Gastrocnemius medialis (tissue), 4 donors: ENCODE measurements at regions of chr17 and their contacts with region 1.

Region 1: GRCh38 chr17:35432176-35433074 is at the start of gene SLFN12:
- DNase-seq: peak; percentile 24 to 35
- ATAC-seq: peak; percentile 82 to 83
- H3K4me3 ChIP-seq: peak within 1 kb of the TSS; percentile 53 to 67 (median 58)
- H3K27ac ChIP-seq: peak within 1 kb of the TSS; percentile 72 to 78 (median 75)
- H3K4me1 ChIP-seq: peaks cover 0 to 8% of the 10 kb centered on the region in 2 donors
- H3K27me3 ChIP-seq: peaks cover 7 to 15% (median 13%) of the 10 kb centered on the region in 3 donors
- CTCF ChIP-seq: no peak
- POLR2A ChIP-seq: peak in 1 of 2 donors; percentile 32
- total RNA-seq, gene SLFN12: 0.76 to 2.2 (median 1.3) TPM

Region 2: DNA sequence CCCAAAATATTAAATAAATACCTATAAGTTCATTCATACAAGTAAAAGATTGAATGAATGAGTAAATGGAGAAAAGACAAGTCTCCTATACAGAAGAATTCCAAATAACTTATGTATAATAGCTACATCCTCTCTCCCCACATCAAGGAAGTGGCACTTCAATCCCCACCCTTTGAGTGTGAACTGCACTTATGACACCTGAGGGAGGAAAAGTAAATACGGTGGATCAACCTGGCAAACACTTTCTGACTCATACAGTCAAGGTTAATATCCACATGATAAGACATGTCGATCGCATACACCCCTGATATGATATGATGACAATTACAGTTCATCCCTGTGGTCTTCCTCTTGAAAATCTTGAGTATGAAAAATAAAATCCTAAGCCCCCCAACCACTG is 87.0 kb after region 1 on chr17:
- in situ Hi-C with region 1: no loop called
- intact Hi-C with region 1: no loop called
- DNase-seq: no peak
- ATAC-seq: no peak
- H3K4me3 ChIP-seq: no peak overlapping the region
- H3K27ac ChIP-seq: no peak overlapping the region
- H3K4me1 ChIP-seq: no peaks in the 10 kb centered on the region
- H3K27me3 ChIP-seq: peaks cover 5 to 16% (median 13%) of the 10 kb centered on the region in 3 donors
- CTCF ChIP-seq: no peak
- POLR2A ChIP-seq: no peak

Region 3: DNA sequence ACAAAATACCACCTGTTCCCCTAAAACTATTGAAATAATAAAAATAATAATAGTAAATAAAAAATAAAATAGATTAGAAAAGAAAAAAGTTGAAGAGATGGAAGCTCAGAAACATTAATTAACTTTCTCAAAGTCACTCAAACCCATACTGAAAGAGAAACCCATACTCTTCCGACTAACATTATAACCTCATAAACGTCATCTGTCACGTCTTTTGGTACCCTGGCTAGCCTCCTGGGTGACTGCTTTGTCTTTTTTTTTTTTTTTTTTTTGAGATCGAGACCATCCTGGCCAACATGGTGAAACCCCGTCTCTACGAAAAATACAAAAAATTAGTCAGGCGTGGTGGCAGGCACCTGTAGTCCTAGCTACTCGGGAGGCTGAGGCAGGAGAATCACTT is 97.4 kb after region 1 on chr17:
- in situ Hi-C with region 1: loop called in 1 of 4 experiments (anchors 25 kb)
- intact Hi-C with region 1: loop called (anchors 5 kb)
- DNase-seq: no peak
- ATAC-seq: no peak
- H3K4me3 ChIP-seq: no peak overlapping the region
- H3K27ac ChIP-seq: no peak overlapping the region
- H3K4me1 ChIP-seq: no peaks in the 10 kb centered on the region
- H3K27me3 ChIP-seq: no peaks in the 10 kb centered on the region
- CTCF ChIP-seq: no peak
- POLR2A ChIP-seq: no peak